A549 (cell line): ENCODE measurements at regions of chr15 and their contacts with region 1.

Region 1: DNA sequence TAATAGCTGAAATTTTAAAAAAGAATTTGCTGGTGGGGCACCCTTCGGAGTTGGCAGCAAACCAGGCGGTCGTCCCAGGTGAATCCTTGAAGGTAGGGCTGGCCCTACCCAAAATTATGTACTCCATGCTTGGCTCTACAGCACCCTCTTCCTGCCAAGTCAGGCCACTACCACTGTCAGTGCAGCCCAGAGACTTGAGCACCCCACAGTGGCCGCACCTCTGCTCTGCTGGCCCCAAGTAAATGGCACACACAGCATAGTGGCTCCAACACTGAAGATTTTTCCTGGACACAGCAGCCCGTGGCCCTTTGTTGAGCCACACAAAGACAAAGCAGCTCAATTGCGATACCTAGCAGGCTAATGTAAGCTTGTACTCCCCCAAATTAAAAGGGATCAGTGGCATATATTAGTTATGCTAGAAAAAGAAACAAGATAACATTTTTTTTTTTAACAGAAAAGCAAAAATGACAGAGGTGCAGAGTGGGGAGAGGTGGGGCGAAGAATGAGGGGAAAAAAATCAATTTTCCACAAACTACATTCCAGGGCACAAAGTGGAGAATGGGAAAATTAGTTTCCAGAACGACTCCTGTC is 250.5 kb downstream of the UACA start:
- DNase-seq: peak; percentile 67 to 90
- ATAC-seq: peak in 1 of 2 experiments; percentile 33; a peak in 3 of 6 replicates
- H3K4me3 ChIP-seq: no peak overlapping the region
- H3K27ac ChIP-seq: peak overlapping the region in 1 of 2 experiments; percentile 4; a peak in 1 of 6 replicates
- H3K4me1 ChIP-seq: peaks cover 20% of the 10 kb centered on the region
- CTCF ChIP-seq: peak; percentile 70
- EP300 ChIP-seq: no peak
- POLR2A ChIP-seq: no peak
- RAD21 ChIP-seq: peak; percentile 83 to 96

Region 2: DNA sequence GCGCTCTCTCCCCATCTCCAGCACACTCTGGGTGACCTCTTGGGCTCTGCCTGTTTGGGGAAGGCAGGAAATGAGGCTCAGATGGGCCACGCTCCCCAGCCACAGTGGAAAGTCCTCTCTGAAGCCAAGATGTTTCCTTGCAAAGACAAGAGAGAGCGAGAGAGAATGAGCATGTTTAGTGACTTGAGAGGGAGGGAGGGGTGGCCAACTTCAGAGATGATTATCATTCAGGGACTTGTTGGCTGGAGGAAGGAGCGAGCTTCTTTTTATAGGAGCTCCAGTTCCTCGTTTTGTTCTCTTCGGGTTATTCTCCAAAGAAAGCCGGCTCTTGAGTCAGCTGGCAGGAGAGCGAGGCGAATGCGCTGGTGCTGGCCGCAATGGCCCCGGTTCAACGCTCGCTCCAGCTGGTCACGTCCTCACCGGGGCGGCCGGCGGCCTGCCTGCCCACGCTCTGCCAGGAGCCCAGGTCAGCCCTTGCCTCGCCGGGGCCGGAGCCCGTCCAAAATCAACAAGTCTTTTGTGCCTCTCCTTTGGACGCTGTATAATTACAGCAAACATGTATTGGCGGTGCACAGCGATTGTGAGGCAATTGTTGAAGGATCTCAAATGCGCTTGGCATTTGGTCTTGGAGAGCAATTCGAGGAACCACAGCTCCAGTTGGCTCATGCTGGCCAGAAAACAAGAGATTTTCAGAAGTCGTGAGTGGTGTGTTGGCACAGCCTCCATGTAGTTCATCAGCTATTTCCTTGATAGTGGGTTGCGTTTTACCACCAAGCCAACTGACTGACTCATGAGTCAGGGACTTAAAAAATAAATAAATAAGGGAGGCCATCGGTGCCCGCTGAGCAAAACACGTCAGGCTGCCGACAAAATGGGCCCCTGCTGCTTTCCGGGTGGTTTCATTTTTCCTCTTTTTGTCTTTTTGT is 38.1 kb before region 1 on chr15:
- CTCF ChIA-PET with region 1: interaction called, 3 read pairs
- POLR2A ChIA-PET with region 1: interaction called, 16 read pairs
- DNase-seq: peak; percentile 90 to 96
- ATAC-seq: peak; percentile 76 to 91
- H3K4me3 ChIP-seq: peak overlapping the region; percentile 8; the same call in 1 of the 3 replicates
- H3K27ac ChIP-seq: peak overlapping the region; percentile 71 to 89
- H3K4me1 ChIP-seq: peaks cover 48% of the 10 kb centered on the region
- CTCF ChIP-seq: no peak
- EP300 ChIP-seq: peak; percentile 67 to 93; a peak in 3 of 5 replicates
- POLR2A ChIP-seq: no peak
- RAD21 ChIP-seq: peak; percentile 25 to 54; a peak in 4 of 5 replicates

Region 3: GRCh38 chr15:70494852-70495571 is 17.9 kb before region 1 on chr15:
- CTCF ChIA-PET with region 1: interaction called, 228 read pairs
- POLR2A ChIA-PET with region 1: interaction called, 31 read pairs
- DNase-seq: peak; percentile 98 to 100
- ATAC-seq: peak; percentile 84 to 93
- H3K4me3 ChIP-seq: no peak overlapping the region
- H3K27ac ChIP-seq: peak overlapping the region; percentile 87 to 93
- H3K4me1 ChIP-seq: peaks cover 55% of the 10 kb centered on the region
- CTCF ChIP-seq: no peak
- EP300 ChIP-seq: peak; percentile 96 to 97
- POLR2A ChIP-seq: no peak
- RAD21 ChIP-seq: peak; percentile 34 to 60

Region 4: DNA sequence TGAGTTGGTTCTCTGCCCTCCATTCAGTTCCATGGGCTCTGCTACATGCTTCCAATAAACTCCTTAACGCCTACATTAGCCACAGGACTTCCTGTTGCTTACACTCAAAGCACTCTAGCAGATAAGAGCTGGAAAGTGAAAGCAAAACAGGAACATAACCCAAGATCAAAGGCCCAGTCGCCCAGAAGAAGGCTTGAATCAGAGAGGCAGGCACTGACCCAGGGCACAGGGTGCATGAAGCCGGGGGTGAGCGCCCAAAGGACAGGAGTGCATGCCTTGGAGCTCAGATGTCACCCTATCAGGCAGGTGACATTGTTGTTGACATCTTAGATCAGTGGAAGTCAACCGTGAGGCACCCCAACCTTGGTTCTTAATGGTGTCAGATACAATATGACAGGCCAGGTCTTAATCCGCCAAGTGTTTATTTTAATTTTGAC is 15.4 kb after region 1 on chr15:
- CTCF ChIA-PET with region 1: interaction called, 16 read pairs
- POLR2A ChIA-PET with region 1: interaction called, 18 read pairs
- DNase-seq: no peak
- ATAC-seq: no peak
- H3K4me3 ChIP-seq: no peak overlapping the region
- H3K27ac ChIP-seq: no peak overlapping the region; a peak in 1 of 6 replicates
- H3K4me1 ChIP-seq: peaks cover 18% of the 10 kb centered on the region
- CTCF ChIP-seq: no peak
- EP300 ChIP-seq: no peak
- POLR2A ChIP-seq: no peak
- RAD21 ChIP-seq: no peak

Region 5: GRCh38 chr15:70627734-70628548 is 115.1 kb after region 1 on chr15:
- CTCF ChIA-PET with region 1: no interaction called
- POLR2A ChIA-PET with region 1: no interaction called
- DNase-seq: no peak
- ATAC-seq: no peak; a peak in 1 of 6 replicates
- H3K4me3 ChIP-seq: no peak overlapping the region
- H3K27ac ChIP-seq: no peak overlapping the region
- H3K4me1 ChIP-seq: 0 out of 3 replicates have a peak, but pooled peaks cover under 1% of the 10 kb centered on the region
- CTCF ChIP-seq: no peak
- EP300 ChIP-seq: no peak
- POLR2A ChIP-seq: no peak
- RAD21 ChIP-seq: no peak